Natural killer cell (primary cell): ENCODE measurements at regions of chr7 and their contacts with region 1.

Region 1: GRCh38 chr7:35037526-35038339 is 448 bp upstream of the DPY19L1 start:
- DNase-seq: peak; percentile 90 to 93
- ATAC-seq: peak; percentile 77 to 94 (median 80)
- H3K4me3 ChIP-seq: peak overlapping the region; percentile 41
- H3K4me3 Mint-ChIP-seq: peak overlapping the region; percentile 93
- H3K27ac ChIP-seq: peak overlapping the region; percentile 63
- H3K27ac Mint-ChIP-seq: peak overlapping the region; percentile 83 to 96
- H3K4me1 ChIP-seq: peaks cover 14% of the 10 kb centered on the region
- H3K4me1 Mint-ChIP-seq: peaks cover 40 to 42% of the 10 kb centered on the region in 2 donors
- H3K27me3 ChIP-seq: no peaks in the 10 kb centered on the region
- H3K27me3 Mint-ChIP-seq: peaks cover under 1 to 4% of the 10 kb centered on the region in 2 donors
- CTCF ChIP-seq: peak; percentile 82

Region 2: DNA sequence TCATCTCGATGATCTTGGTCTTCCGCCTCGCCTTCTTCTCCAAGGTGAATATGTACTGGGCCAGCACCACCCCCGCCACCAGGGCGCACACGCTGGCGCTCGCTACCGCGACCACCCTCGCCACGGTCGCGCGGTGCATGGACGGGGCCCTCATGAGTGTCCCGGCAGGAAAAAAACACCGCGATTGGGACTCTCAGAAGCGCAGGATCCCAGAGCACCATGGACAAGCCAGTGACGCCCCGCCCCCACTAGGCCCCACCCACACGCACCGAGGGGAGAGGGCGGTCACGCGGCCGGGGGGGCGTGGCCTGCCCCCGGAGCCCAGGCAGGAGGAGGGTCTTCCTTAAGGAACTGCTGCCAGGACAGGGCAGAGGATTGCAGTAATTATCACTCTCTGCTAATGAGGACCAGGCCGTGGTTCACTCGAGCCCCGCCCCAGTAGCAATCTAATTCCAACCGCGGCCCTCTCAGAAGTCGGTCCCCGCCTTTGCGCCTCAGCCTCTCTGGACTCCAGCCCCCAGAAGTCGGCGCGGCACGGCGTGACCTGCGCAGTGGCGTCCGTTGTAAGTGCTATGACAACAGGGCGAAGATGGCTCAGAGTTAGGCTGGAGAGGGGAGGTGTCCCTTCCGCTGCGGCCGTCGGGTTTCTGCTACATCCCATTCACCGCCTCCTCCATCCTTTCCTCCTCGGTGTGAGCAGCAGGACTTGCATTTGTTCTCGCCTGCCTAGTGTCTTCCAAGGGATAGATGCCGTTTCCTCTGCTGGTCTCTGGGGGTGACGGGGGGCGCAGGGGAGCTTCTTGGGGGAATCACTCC is 1908.5 kb before region 1 on chr7 and contains the start of gene BBS9:
- intact Hi-C with region 1: loop called (anchors 5 kb)
- DNase-seq: peak; percentile 88 to 94
- ATAC-seq: peak; percentile 95 to 98 (median 97)
- H3K4me3 ChIP-seq: peak within 1 kb of the TSS; percentile 62
- H3K4me3 Mint-ChIP-seq: peak within 1 kb of the TSS; percentile 97
- H3K27ac ChIP-seq: peak within 1 kb of the TSS; percentile 42
- H3K27ac Mint-ChIP-seq: peak within 1 kb of the TSS; percentile 88 to 89
- H3K4me1 ChIP-seq: peaks cover 8% of the 10 kb centered on the region
- H3K4me1 Mint-ChIP-seq: peaks cover 11 to 20% of the 10 kb centered on the region in 2 donors
- H3K27me3 ChIP-seq: no peaks in the 10 kb centered on the region
- H3K27me3 Mint-ChIP-seq: no peaks in the 10 kb centered on the region
- CTCF ChIP-seq: no peak
- total RNA-seq, gene BBS9: 25.1 to 34.6 (median 34.4) TPM

Region 3: DNA sequence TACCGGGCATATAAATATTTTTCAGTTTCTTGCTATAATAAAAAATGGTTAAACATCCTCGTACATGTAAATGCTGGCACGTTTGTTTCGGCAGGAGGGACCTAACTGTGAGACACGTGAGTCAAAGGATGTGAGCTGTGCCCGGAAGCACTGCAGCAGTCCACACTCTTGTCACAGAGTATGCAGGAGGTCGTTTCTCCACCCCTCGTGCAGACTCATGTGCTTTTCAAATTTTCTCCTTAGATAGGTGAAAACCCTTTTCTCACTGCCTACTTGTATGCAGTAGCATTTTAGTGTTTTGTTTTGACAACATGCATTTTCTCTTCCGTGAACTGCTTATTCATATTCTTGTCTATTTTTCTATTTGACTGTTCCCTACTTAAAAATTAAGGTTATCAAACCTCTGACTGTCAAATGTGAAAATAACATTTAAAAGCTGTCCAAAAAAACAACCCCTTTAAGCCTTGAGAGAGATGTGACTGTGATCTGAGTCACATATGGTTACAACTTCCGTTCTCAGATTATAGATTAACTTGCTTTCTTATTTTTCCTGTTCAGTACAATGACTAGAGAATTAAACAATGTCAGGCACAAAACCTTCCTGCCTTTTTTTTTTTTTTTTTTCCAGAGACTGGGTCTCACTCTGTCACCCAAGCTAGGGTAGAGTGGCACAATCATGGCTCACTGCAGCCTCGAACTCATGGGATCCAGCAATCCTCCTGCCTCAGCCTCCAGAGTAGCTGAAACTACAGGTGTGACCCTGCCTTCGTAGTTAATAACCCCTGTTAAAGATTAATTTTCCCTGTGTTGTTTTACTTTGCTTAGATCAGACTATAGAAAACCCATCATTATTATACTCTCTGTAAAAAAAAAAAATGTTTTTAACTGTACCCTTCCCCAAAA is 45.5 kb before region 1 on chr7:
- intact Hi-C with region 1: loop called (anchors 2 kb)
- DNase-seq: peak in 1 of 2 donors; percentile 64
- ATAC-seq: peak; percentile 89 to 90 (median 89)
- H3K4me3 ChIP-seq: no peak overlapping the region
- H3K4me3 Mint-ChIP-seq: peak overlapping the region; percentile 71
- H3K27ac ChIP-seq: peak overlapping the region; percentile 4
- H3K27ac Mint-ChIP-seq: peak overlapping the region; percentile 70 to 84
- H3K4me1 ChIP-seq: no peaks in the 10 kb centered on the region
- H3K4me1 Mint-ChIP-seq: peaks cover 9 to 18% of the 10 kb centered on the region in 2 donors
- H3K27me3 ChIP-seq: no peaks in the 10 kb centered on the region
- H3K27me3 Mint-ChIP-seq: no peaks in the 10 kb centered on the region
- CTCF ChIP-seq: no peak

Region 4: GRCh38 chr7:36152756-36153570 is 1115.2 kb after region 1 on chr7 and contains the start of gene EEPD1:
- intact Hi-C with region 1: loop called (anchors 5 kb)
- DNase-seq: peak; percentile 98 to 100
- ATAC-seq: peak; percentile 93 to 98 (median 93)
- H3K4me3 ChIP-seq: peak within 1 kb of the TSS; percentile 47
- H3K4me3 Mint-ChIP-seq: peak within 1 kb of the TSS; percentile 88
- H3K27ac ChIP-seq: peak within 1 kb of the TSS; percentile 4
- H3K27ac Mint-ChIP-seq: peak within 1 kb of the TSS; percentile 18 to 65
- H3K4me1 ChIP-seq: peaks cover 19% of the 10 kb centered on the region
- H3K4me1 Mint-ChIP-seq: peaks cover 5 to 17% of the 10 kb centered on the region in 2 donors
- H3K27me3 ChIP-seq: no peaks in the 10 kb centered on the region
- H3K27me3 Mint-ChIP-seq: peaks cover 0 to 4% of the 10 kb centered on the region in 2 donors
- CTCF ChIP-seq: no peak
- total RNA-seq, gene EEPD1: 0.45 to 4.9 (median 1.4) TPM